Heart left ventricle (tissue), 16 donors: ENCODE measurements at regions of chr2 and their contacts with region 1.

Region 1: DNA sequence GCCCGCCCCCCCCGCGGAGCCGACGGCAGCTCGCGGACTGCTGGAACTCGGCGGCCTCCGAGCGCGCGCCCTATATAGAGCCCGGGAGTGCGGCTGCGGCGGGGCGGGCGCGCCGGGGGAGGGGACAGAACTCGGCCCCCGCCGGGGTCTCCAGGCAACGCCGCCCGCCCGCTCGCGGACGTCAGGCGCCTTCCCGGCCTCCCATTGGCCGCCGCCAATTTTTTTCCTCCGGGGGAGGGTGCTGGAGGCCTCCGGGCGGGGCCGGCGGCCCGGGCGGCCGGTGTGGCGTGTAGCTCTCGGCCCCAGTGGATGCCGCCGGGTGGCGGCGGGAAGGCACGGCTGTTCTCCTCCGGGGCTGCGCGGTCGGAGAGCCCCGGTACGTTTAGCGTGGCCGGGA is at the start of gene ZFP36L2:
- DNase-seq: peak; percentile 98 to 99 (median 98)
- ATAC-seq: peak; percentile 71 to 86 (median 81)
- H3K4me3 ChIP-seq: peak within 1 kb of the TSS; percentile 65 to 97 (median 84)
- H3K27ac ChIP-seq: peak within 1 kb of the TSS; percentile 96 to 99 (median 99)
- H3K4me1 ChIP-seq: peaks cover 3 to 76% (median 36%) of the 10 kb centered on the region in 12 donors
- H3K27me3 ChIP-seq: no peaks in the 10 kb centered on the region
- CTCF ChIP-seq: peak in 3 of 12 donors; percentile 10 to 25 (median 14)
- POLR2A ChIP-seq: peak; percentile 73 to 100
- total RNA-seq, gene ZFP36L2: 28.8 to 94.4 (median 44.9) TPM

Region 2: GRCh38 chr2:42859006-42859552 is 367.5 kb before region 1 on chr2:
- intact Hi-C with region 1: loop called in 6 of 10 experiments (anchors 2 to 10 kb)
- DNase-seq: peak in 2 of 5 donors; percentile 57 to 58
- ATAC-seq: peak in 1 of 4 donors; percentile 20
- H3K4me3 ChIP-seq: no peak overlapping the region
- H3K27ac ChIP-seq: peak overlapping the region in 4 of 12 donors; percentile 7 to 52 (median 31)
- H3K4me1 ChIP-seq: peaks cover 0 to 14% (median 7%) of the 10 kb centered on the region in 12 donors
- H3K27me3 ChIP-seq: no peaks in the 10 kb centered on the region
- CTCF ChIP-seq: peak; percentile 75 to 93 (median 87)
- POLR2A ChIP-seq: no peak

Region 3: GRCh38 chr2:43024515-43025011 is 202.0 kb before region 1 on chr2:
- intact Hi-C with region 1: loop called (anchors 1 to 5 kb)
- DNase-seq: peak; percentile 68 to 81 (median 77)
- ATAC-seq: peak in 3 of 4 donors; percentile 78 to 82 (median 78)
- H3K4me3 ChIP-seq: no peak overlapping the region
- H3K27ac ChIP-seq: peak overlapping the region in 1 of 12 donors; percentile 39
- H3K4me1 ChIP-seq: peaks cover 0 to 37% (median 27%) of the 10 kb centered on the region in 12 donors
- H3K27me3 ChIP-seq: no peaks in the 10 kb centered on the region
- CTCF ChIP-seq: peak; percentile 69 to 96 (median 82)
- POLR2A ChIP-seq: no peak

Region 4: DNA sequence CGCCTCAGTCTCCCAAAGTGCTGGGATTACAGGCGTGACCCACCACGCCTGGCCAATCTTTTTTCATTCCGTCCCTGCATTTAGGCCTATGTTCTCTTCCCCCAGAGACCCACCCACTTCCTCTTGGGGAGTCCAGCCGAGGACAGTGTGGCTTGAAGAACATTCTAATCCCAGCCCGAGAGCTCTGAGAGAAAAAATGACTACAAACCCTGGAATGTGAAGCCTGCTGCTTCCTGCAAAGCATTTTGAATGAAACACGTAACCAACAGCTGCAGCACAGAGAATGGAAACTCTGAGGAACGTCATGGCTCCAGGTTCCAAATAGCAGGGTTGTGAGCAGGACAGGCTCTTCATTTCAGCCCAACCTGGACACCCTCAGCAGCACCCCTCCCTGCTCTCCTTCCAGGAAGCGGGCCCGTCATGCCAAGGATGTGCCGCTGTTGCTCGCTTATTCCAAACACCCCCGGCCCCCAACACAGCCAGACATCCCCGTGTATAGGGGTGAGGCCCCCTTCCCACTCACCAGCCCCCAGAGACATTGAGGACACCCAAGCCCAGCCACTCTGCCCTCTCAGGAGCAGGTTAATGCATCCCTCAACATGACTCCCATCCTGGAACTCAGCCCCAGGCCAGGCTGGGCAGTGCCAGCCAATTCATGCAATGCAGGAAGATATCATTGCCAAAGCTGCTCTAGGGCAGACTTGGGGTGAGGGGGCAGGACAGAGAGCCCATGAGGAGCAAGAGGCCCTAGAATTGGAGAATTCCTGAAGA is 139.9 kb before region 1 on chr2:
- intact Hi-C with region 1: loop called in 2 of 10 experiments (anchors 1 to 5 kb)
- DNase-seq: peak; percentile 71 to 88 (median 84)
- ATAC-seq: peak; percentile 85 to 89 (median 88)
- H3K4me3 ChIP-seq: no peak overlapping the region
- H3K27ac ChIP-seq: peak overlapping the region; percentile 74 to 96 (median 89)
- H3K4me1 ChIP-seq: peaks cover 12 to 60% (median 56%) of the 10 kb centered on the region in 12 donors
- H3K27me3 ChIP-seq: no peaks in the 10 kb centered on the region
- CTCF ChIP-seq: no peak
- POLR2A ChIP-seq: no peak

Region 5: GRCh38 chr2:43169987-43170386 is 56.6 kb before region 1 on chr2:
- intact Hi-C with region 1: no loop called
- DNase-seq: peak in 1 of 5 donors; percentile 69
- ATAC-seq: no peak
- H3K4me3 ChIP-seq: no peak overlapping the region
- H3K27ac ChIP-seq: peak overlapping the region in 5 of 12 donors; percentile 34 to 85 (median 67)
- H3K4me1 ChIP-seq: peaks cover 0 to 73% (median 31%) of the 10 kb centered on the region in 12 donors
- H3K27me3 ChIP-seq: no peaks in the 10 kb centered on the region
- CTCF ChIP-seq: peak; percentile 15 to 54 (median 38)
- POLR2A ChIP-seq: no peak

Region 6: GRCh38 chr2:43478411-43479086 is 252.0 kb after region 1 on chr2:
- intact Hi-C with region 1: loop called in 6 of 10 experiments (anchors 1 to 5 kb)
- DNase-seq: no peak
- ATAC-seq: no peak
- H3K4me3 ChIP-seq: no peak overlapping the region
- H3K27ac ChIP-seq: no peak overlapping the region
- H3K4me1 ChIP-seq: peaks cover 0 to 28% (median 19%) of the 10 kb centered on the region in 12 donors
- H3K27me3 ChIP-seq: no peaks in the 10 kb centered on the region
- CTCF ChIP-seq: no peak
- POLR2A ChIP-seq: no peak

Region 7: GRCh38 chr2:43542285-43542937 is 315.9 kb after region 1 on chr2:
- intact Hi-C with region 1: loop called in 5 of 10 experiments (anchors 5 to 10 kb)
- DNase-seq: no peak
- ATAC-seq: peak in 1 of 4 donors; percentile 33
- H3K4me3 ChIP-seq: no peak overlapping the region
- H3K27ac ChIP-seq: peak overlapping the region in 1 of 12 donors; percentile 62
- H3K4me1 ChIP-seq: peaks cover 0 to 28% (median 2%) of the 10 kb centered on the region in 12 donors
- H3K27me3 ChIP-seq: no peaks in the 10 kb centered on the region
- CTCF ChIP-seq: peak; percentile 50 to 74 (median 60)
- POLR2A ChIP-seq: no peak